ENCODE measurements at regions of chr2 and their contacts with region 1.

Region 1: DNA sequence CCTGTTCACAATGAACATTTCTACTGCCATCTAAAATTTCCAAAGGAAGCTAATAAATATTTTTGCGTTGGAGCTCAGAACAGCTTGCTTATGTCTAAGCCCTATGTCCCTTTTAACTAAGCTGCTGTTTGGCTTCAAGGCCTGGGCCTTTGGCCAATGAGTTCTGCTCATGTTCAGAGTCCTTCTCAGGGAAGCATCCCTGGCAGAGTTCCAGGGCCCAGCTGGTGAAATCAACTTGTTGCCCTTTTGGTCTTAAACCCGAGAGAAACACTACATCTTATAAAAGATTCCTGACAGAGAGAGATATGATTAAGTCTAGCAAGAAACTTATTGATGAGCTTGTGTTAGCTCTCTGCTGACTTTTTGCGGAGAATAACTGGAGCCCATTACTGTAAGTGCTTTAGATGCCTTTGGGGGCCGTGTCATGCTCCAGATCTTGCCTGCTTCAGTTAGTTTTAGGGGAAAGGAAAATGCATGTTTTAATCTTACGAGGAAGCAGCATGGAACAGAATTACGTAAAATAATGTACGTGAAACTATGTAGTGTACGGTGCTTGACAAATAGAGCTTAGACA is 102.5 kb upstream of the NOSTRIN start:
- DNase-seq: peak; percentile 25
- H3K4me3 ChIP-seq: no peak overlapping the region
- H3K27ac ChIP-seq: no peak overlapping the region
- H3K4me1 ChIP-seq: no peaks in the 10 kb centered on the region
- H3K27me3 ChIP-seq: no peaks in the 10 kb centered on the region
- CTCF ChIP-seq: no peak
- POLR2A ChIP-seq: no peak

Region 2: GRCh38 chr2:168635065-168635577 is 64.8 kb before region 1 on chr2:
- intact Hi-C with region 1: loop called (anchors 5 kb)
- DNase-seq: no peak
- H3K4me3 ChIP-seq: no peak overlapping the region
- H3K27ac ChIP-seq: peak overlapping the region in 1 of 2 donors; percentile 30
- H3K4me1 ChIP-seq: no peaks in the 10 kb centered on the region
- H3K27me3 ChIP-seq: no peaks in the 10 kb centered on the region
- CTCF ChIP-seq: no peak
- POLR2A ChIP-seq: no peak